ENCODE measurements at regions of chr16 and their contacts with region 1.

Region 1: GRCh38 chr16:5571446-5571845 is 473.9 kb upstream of the EEF2KMT start:
- DNase-seq: no peak
- ATAC-seq: no peak
- H3K4me3 ChIP-seq: no peak overlapping the region
- H3K4me3 Mint-ChIP-seq: no peak overlapping the region
- H3K27ac ChIP-seq: no peak overlapping the region
- H3K27ac Mint-ChIP-seq: no peak overlapping the region
- H3K4me1 ChIP-seq: no peaks in the 10 kb centered on the region
- H3K4me1 Mint-ChIP-seq: no peaks in the 10 kb centered on the region
- H3K27me3 ChIP-seq: no peaks in the 10 kb centered on the region
- H3K27me3 Mint-ChIP-seq: peaks cover 2% of the 10 kb centered on the region
- CTCF ChIP-seq: no peak

Region 2: GRCh38 chr16:5323284-5324141 is 247.9 kb before region 1 on chr16:
- CTCF ChIA-PET with region 1: no interaction called
- POLR2A ChIA-PET with region 1: no interaction called
- intact Hi-C with region 1: no loop called
- DNase-seq: no peak
- ATAC-seq: no peak
- H3K4me3 ChIP-seq: no peak overlapping the region
- H3K4me3 Mint-ChIP-seq: no peak overlapping the region
- H3K27ac ChIP-seq: no peak overlapping the region
- H3K27ac Mint-ChIP-seq: no peak overlapping the region
- H3K4me1 ChIP-seq: no peaks in the 10 kb centered on the region
- H3K4me1 Mint-ChIP-seq: no peaks in the 10 kb centered on the region
- H3K27me3 ChIP-seq: no peaks in the 10 kb centered on the region
- H3K27me3 Mint-ChIP-seq: peaks cover 8% of the 10 kb centered on the region
- CTCF ChIP-seq: no peak

Region 3: GRCh38 chr16:5590416-5590815 is 19.0 kb after region 1 on chr16:
- CTCF ChIA-PET with region 1: no interaction called
- POLR2A ChIA-PET with region 1: no interaction called
- intact Hi-C with region 1: loop called in 1 of 2 experiments (anchors 1 kb)
- DNase-seq: no peak
- ATAC-seq: no peak
- H3K4me3 ChIP-seq: no peak overlapping the region
- H3K4me3 Mint-ChIP-seq: no peak overlapping the region
- H3K27ac ChIP-seq: no peak overlapping the region
- H3K27ac Mint-ChIP-seq: no peak overlapping the region
- H3K4me1 ChIP-seq: no peaks in the 10 kb centered on the region
- H3K4me1 Mint-ChIP-seq: no peaks in the 10 kb centered on the region
- H3K27me3 ChIP-seq: no peaks in the 10 kb centered on the region
- H3K27me3 Mint-ChIP-seq: peaks cover 2% of the 10 kb centered on the region
- CTCF ChIP-seq: no peak

Measured in CD8-positive, alpha-beta T cell (primary cell).